K562 (cell line): ENCODE measurements at regions of chr13 and their contacts with region 1.

Region 1: DNA sequence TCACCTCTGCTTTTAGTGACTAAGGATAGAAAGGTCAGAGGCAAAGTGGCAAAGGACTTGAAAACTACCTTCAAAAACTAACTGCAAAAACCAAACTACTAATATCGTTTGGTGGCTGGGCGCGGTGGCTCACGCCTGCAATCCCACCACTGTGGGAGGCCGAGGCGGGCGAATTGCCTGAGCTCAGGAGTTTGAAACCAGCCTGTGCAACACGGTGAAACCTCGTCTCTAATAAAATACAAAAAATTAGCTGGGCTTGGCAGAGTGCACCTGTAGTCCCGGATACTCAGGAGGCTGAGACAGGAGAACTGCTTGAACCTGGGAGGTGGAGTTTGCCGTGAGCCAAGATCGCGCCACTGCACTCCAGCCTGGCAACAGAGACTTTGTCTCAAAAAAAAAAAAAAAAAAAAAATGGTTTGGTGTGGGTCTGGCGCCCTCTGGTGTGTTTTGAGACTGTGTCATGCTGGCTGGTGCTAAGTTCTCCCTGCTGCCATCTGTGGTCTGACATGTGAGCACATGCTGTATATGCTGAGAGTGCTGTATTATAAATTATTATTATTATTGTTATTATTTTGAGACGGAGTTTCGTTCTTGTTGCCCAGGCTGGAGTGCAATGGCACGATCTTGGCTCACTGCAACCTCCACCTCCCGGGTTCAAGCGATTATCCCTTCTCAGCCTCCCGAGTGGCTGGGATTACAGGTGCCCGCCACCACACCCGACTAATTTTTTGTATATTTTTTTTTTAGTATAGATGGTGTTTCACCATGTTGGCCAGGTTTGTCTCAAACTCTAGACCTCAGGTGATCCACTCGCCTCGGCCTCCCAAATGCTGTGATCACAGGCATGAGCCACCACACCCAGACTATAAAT is 36.0 kb upstream of the RNF17 start:
- DNase-seq: peak; percentile 49 to 75 (median 61)
- ATAC-seq: peak; percentile 99
- H3K4me3 ChIP-seq: no peak overlapping the region
- H3K27ac ChIP-seq: no peak overlapping the region
- H3K4me1 ChIP-seq: no peaks in the 10 kb centered on the region
- H3K27me3 ChIP-seq: peaks cover 0 to 6% of the 10 kb centered on the region in 2 experiments; a peak in 2 of 5 replicates
- CTCF ChIP-seq: peak; percentile 71 to 99 (median 96)
- EP300 ChIP-seq: no peak
- POLR2A ChIP-seq: no peak
- RAD21 ChIP-seq: peak in 1 of 2 experiments; percentile 51; a peak in 3 of 4 replicates

Region 2: GRCh38 chr13:24693862-24694471 is 34.0 kb before region 1 on chr13:
- CTCF ChIA-PET with region 1: interaction called, 3 read pairs
- POLR2A ChIA-PET with region 1: no interaction called
- in situ Hi-C with region 1: no loop called
- intact Hi-C with region 1: loop called (anchors 1 kb)
- DNase-seq: peak; percentile 64 to 76 (median 73)
- ATAC-seq: peak; percentile 93
- H3K4me3 ChIP-seq: no peak overlapping the region
- H3K27ac ChIP-seq: no peak overlapping the region
- H3K4me1 ChIP-seq: no peaks in the 10 kb centered on the region
- H3K27me3 ChIP-seq: peaks cover 4 to 26% of the 10 kb centered on the region in 2 experiments; a peak in 4 of 5 replicates
- CTCF ChIP-seq: peak; percentile 64 to 71 (median 70)
- EP300 ChIP-seq: no peak
- POLR2A ChIP-seq: no peak
- RAD21 ChIP-seq: peak; percentile 56 to 67

Region 3: GRCh38 chr13:25518441-25518840 is 790.5 kb after region 1 on chr13:
- CTCF ChIA-PET with region 1: no interaction called
- POLR2A ChIA-PET with region 1: no interaction called
- in situ Hi-C with region 1: no loop called
- intact Hi-C with region 1: no loop called
- DNase-seq: no peak
- ATAC-seq: no peak
- H3K4me3 ChIP-seq: no peak overlapping the region
- H3K27ac ChIP-seq: no peak overlapping the region
- H3K4me1 ChIP-seq: no peaks in the 10 kb centered on the region; a peak in 1 of 5 replicates
- H3K27me3 ChIP-seq: no peaks in the 10 kb centered on the region
- CTCF ChIP-seq: no peak
- EP300 ChIP-seq: no peak
- POLR2A ChIP-seq: no peak
- RAD21 ChIP-seq: no peak